Activated T-helper 1 cell treated with anti-CD3 and anti-CD28 coated beads, Interleukin-12 subunit alpha, Interleukin-12 subunit beta, Interleukin-2, Interleukin-4 antibody, amounts not matched to agents 30 ng/mL and 10 ng/mL and 1 ng/mL, durations not matched to agents 14 hours and 24 hours and 36 hours (primary cell): ENCODE measurements at regions of chr1 and their contacts with region 1.

Region 1: GRCh38 chr1:8727809-8728213 is 89.6 kb downstream of the RERE start:
- DNase-seq: no peak
- H3K4me3 Mint-ChIP-seq: no peak overlapping the region
- H3K27ac Mint-ChIP-seq: no peak overlapping the region
- H3K4me1 Mint-ChIP-seq: peaks cover 24% of the 10 kb centered on the region
- H3K27me3 Mint-ChIP-seq: no peaks in the 10 kb centered on the region

Region 2: DNA sequence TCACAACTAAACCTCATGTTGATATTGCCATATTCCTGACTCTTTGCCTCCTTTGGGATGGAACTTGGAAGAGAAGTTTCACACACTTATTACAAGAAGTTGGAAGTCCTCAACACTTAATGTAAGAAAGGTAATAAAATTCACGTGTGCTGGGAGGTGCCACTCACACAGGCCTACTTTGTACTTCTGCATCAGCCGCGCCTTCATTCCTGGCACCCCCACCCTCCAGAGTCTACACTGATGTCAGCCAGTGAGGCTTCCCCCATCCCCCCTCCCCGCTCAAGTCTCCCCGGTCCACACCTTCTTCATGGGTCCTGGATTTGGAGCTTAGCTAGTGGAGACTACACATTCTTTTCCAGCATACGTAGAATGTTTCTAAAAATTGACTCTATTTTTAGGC is 434.7 kb before region 1 on chr1:
- intact Hi-C with region 1: no loop called
- DNase-seq: no peak
- H3K4me3 Mint-ChIP-seq: no peak overlapping the region
- H3K27ac Mint-ChIP-seq: no peak overlapping the region
- H3K4me1 Mint-ChIP-seq: no peaks in the 10 kb centered on the region
- H3K27me3 Mint-ChIP-seq: no peaks in the 10 kb centered on the region

Region 3: DNA sequence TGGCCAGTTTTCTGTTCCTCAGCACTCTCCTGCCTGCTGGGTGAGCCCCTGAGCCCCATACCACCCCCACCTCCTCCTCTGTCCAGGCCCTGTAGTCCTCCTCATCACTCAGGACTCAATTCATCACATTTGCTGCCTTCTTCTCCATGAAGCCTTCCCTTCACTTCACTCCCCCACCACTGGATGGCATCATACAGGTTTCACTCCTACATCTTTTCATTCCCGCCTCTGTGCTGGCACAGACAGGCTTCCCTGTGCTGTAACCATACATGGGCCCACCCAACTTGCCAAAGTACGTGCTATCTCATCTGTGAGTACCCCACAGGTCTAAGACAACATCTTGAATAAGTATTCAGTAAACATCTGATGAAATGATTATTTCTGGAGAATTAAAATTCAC is 353.0 kb before region 1 on chr1:
- intact Hi-C with region 1: loop called (anchors 1 kb)
- DNase-seq: no peak
- H3K4me3 Mint-ChIP-seq: no peak overlapping the region
- H3K27ac Mint-ChIP-seq: peak overlapping the region; percentile 60
- H3K4me1 Mint-ChIP-seq: peaks cover 40% of the 10 kb centered on the region
- H3K27me3 Mint-ChIP-seq: no peaks in the 10 kb centered on the region

Region 4: GRCh38 chr1:8671306-8671917 is 56.4 kb before region 1 on chr1:
- intact Hi-C with region 1: loop called (anchors 10 kb)
- DNase-seq: no peak
- H3K4me3 Mint-ChIP-seq: no peak overlapping the region
- H3K27ac Mint-ChIP-seq: no peak overlapping the region
- H3K4me1 Mint-ChIP-seq: peaks cover 49% of the 10 kb centered on the region
- H3K27me3 Mint-ChIP-seq: no peaks in the 10 kb centered on the region

Region 5: GRCh38 chr1:8717148-8717547 is 10.7 kb before region 1 on chr1:
- intact Hi-C with region 1: no loop called
- DNase-seq: no peak
- H3K4me3 Mint-ChIP-seq: no peak overlapping the region
- H3K27ac Mint-ChIP-seq: no peak overlapping the region
- H3K4me1 Mint-ChIP-seq: peaks cover 39% of the 10 kb centered on the region
- H3K27me3 Mint-ChIP-seq: no peaks in the 10 kb centered on the region

Region 6: DNA sequence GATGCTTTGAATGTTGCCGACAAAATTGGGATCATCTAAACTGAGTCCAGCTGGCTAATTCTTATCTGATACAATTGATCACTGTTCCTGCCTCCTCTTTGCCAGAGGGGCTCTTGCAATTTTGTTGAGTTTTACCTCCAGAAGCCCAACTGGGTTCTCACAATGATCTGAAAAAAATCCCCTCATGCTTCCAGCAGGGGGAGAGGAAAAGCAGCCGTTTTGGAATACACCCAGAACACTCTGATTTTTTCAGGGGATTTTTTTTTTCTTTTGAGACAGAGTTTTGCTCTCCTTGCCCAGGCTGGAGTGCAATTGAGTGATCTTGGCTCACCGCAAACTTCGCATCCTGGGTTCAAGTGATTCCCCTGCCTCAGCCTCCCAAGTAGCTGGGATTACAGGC is 103.5 kb after region 1 on chr1:
- intact Hi-C with region 1: no loop called
- DNase-seq: no peak
- H3K4me3 Mint-ChIP-seq: no peak overlapping the region
- H3K27ac Mint-ChIP-seq: no peak overlapping the region
- H3K4me1 Mint-ChIP-seq: peaks cover 8% of the 10 kb centered on the region
- H3K27me3 Mint-ChIP-seq: peaks cover 2% of the 10 kb centered on the region

Region 7: GRCh38 chr1:8848663-8849386 is 121.0 kb after region 1 on chr1:
- intact Hi-C with region 1: loop called (anchors 10 kb)
- DNase-seq: peak; percentile 53
- H3K4me3 Mint-ChIP-seq: no peak overlapping the region
- H3K27ac Mint-ChIP-seq: no peak overlapping the region
- H3K4me1 Mint-ChIP-seq: no peaks in the 10 kb centered on the region
- H3K27me3 Mint-ChIP-seq: peaks cover 5% of the 10 kb centered on the region

Region 8: DNA sequence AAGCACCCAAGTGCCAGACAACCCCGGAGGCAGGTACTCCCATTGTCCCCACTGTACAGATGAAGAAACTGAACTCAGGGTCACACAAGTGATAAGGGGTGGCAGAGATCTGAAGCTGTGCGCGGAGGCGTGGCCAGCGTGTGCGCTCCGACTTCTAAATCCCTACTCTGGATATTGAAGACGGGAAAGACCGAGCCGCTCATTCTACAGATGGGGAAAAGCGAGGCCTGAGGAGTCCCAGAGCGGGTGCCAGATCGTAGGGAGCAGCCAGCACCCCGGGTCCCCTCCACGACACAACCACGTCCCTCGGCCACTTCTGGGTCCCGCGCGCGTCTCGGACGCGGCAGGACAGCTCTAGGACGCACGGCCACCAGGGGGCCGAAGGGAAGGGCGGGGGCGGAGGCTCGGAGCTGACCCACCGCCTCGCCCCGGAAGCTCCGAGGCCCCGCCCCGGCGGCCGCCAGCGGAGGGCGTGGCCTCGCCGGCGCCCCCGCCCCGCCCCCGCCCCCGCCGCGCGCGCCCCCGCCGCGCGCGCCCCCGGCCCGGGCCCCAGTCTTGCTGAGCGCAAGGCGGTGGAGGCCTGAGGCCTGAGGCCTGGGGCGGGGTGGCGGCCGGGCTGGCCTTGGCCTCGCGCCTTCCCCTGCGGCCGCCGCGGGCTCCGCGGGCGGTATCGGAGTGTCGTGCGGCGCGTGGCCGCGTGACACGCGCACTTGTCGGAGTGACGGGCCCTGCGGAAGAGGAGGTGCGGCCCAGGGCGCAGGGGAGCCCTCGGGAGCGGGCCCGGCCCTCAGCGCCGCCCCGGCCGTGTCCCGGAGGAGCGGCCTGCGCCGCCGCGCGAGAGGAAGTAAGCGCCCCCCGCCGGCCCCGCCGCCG is 506.6 kb after region 1 on chr1 and contains the start of gene H6PD:
- intact Hi-C with region 1: no loop called
- DNase-seq: peak; percentile 82
- H3K4me3 Mint-ChIP-seq: peak within 1 kb of the TSS; percentile 94
- H3K27ac Mint-ChIP-seq: peak within 1 kb of the TSS; percentile 98
- H3K4me1 Mint-ChIP-seq: peaks cover 36% of the 10 kb centered on the region
- H3K27me3 Mint-ChIP-seq: peaks cover 3% of the 10 kb centered on the region
- total RNA-seq, gene H6PD: 15.7 TPM in 2 replicates